K562 (cell line): ENCODE measurements at regions of chr10 and their contacts with region 1.

Region 1: GRCh38 chr10:50417886-50418830 is 166.8 kb upstream of the ASAH2 start:
- DNase-seq: peak; percentile 77 to 94 (median 84)
- ATAC-seq: peak; percentile 81
- H3K4me3 ChIP-seq: peak overlapping the region; percentile 71
- H3K27ac ChIP-seq: peak overlapping the region; percentile 75
- H3K4me1 ChIP-seq: peaks cover 8 to 42% of the 10 kb centered on the region in 2 experiments
- H3K27me3 ChIP-seq: no peaks in the 10 kb centered on the region
- CTCF ChIP-seq: no peak
- EP300 ChIP-seq: peak; percentile 50; the same call in 1 of the 2 replicates
- POLR2A ChIP-seq: peak; percentile 76
- RAD21 ChIP-seq: no peak

Region 2: DNA sequence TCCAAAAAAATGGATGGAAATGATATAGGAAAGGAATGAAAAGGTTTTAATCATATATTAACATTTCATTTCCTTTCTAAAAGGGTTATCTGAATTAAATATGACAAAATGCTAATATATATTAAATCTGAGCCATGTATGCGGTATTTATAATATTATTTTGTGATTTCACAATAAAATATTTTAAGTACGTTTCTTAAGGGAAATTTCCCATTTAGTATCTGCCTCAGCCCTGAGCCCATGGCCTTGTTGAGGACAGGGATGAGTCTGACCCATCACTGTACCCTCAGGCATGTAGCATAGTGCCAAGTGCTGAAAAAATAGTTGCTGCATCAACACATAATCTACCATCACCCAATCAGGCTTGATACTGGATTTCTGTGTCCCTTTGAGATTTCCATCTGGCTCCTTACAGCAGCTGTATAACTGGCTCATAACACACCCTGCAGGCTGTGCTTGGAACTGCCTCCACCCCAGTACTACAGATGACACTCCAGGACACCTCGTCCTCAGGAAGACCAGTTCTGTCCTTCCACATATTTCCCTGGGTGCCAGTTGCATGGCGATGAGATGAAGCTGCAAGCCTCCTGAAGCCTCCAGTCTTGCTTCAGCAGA is 107.5 kb before region 1 on chr10:
- CTCF ChIA-PET with region 1: no interaction called
- POLR2A ChIA-PET with region 1: interaction called, 3 read pairs
- in situ Hi-C with region 1: no loop called
- intact Hi-C with region 1: loop called (anchors 2 kb)
- DNase-seq: peak; percentile 73 to 88 (median 75)
- ATAC-seq: peak; percentile 84
- H3K4me3 ChIP-seq: no peak overlapping the region
- H3K27ac ChIP-seq: peak overlapping the region; percentile 37; the same call in 2 of the 3 replicates
- H3K4me1 ChIP-seq: peaks cover 7 to 49% of the 10 kb centered on the region in 2 experiments
- H3K27me3 ChIP-seq: no peaks in the 10 kb centered on the region
- CTCF ChIP-seq: peak; percentile 78 to 93 (median 78)
- EP300 ChIP-seq: no peak
- POLR2A ChIP-seq: no peak; the same call in 1 of the 2 replicates
- RAD21 ChIP-seq: peak; percentile 39 to 75; a peak in 3 of 4 replicates

Region 3: DNA sequence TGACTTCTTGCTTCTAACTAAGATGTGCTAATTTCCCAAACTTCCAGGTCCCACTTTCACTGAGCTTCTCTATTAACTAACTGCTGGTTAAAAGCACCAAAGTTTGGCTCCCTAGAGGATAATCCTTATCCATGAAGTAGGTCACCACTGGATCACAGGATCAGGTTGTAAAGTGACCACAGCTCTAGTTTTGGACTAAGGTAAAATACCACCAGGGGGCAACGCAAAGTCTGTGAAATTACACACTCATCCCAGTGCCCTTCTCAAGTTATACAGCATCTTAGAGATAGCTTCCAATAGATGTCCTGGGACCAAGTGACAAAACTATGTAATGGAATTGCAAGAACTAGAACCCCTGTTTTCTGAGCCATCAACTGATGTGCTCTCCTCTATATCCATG is 50.4 kb before region 1 on chr10:
- CTCF ChIA-PET with region 1: interaction called, 5 read pairs
- POLR2A ChIA-PET with region 1: no interaction called
- in situ Hi-C with region 1: no loop called
- intact Hi-C with region 1: loop called (anchors 2 kb)
- DNase-seq: peak; percentile 51 to 69 (median 58)
- ATAC-seq: peak; percentile 75
- H3K4me3 ChIP-seq: no peak overlapping the region
- H3K27ac ChIP-seq: no peak overlapping the region
- H3K4me1 ChIP-seq: peaks cover 4 to 28% of the 10 kb centered on the region in 2 experiments; a peak in 4 of 5 replicates
- H3K27me3 ChIP-seq: no peaks in the 10 kb centered on the region
- CTCF ChIP-seq: peak; percentile 44 to 64 (median 61); a peak in 5 of 6 replicates
- EP300 ChIP-seq: no peak
- POLR2A ChIP-seq: no peak
- RAD21 ChIP-seq: peak; percentile 58 to 75

Region 4: DNA sequence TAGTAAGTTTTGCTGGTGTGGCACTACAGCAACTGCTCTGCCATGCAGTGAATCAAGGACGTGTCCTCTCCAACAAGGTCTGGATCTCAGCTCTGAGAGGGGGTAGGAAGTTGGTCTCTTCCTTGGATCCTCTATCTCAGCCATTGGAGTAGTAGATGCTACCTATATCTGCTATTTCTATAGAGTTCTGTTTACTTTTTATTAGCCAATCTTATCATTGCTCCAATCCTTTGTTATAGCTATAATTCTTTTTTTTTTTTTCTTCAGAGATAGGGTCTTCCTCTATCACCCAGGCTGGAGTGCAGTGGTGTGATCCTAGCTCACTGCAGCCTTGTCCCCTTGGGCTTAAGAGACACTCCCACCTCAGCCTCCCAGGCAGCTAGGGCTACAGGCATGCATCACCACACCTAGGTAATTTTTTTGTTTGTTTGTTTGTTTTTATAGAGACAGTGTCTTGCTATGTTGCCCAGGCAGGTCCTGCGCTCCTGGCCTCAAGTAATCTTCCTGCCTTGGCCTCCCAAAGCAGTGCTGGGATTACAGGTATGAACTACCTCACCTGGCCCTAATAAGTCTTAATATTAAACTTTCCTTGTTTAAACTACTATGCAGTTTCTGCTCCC is 11.6 kb before region 1 on chr10:
- CTCF ChIA-PET with region 1: no interaction called
- POLR2A ChIA-PET with region 1: interaction called, 12 read pairs
- in situ Hi-C with region 1: no loop called
- intact Hi-C with region 1: no loop called
- DNase-seq: no peak
- ATAC-seq: peak; percentile 26
- H3K4me3 ChIP-seq: no peak overlapping the region
- H3K27ac ChIP-seq: peak overlapping the region; percentile 23; the same call in 2 of the 3 replicates
- H3K4me1 ChIP-seq: peaks cover 12 to 47% of the 10 kb centered on the region in 2 experiments; a peak in 4 of 5 replicates
- H3K27me3 ChIP-seq: no peaks in the 10 kb centered on the region
- CTCF ChIP-seq: no peak
- EP300 ChIP-seq: no peak
- POLR2A ChIP-seq: no peak
- RAD21 ChIP-seq: no peak

Region 5: DNA sequence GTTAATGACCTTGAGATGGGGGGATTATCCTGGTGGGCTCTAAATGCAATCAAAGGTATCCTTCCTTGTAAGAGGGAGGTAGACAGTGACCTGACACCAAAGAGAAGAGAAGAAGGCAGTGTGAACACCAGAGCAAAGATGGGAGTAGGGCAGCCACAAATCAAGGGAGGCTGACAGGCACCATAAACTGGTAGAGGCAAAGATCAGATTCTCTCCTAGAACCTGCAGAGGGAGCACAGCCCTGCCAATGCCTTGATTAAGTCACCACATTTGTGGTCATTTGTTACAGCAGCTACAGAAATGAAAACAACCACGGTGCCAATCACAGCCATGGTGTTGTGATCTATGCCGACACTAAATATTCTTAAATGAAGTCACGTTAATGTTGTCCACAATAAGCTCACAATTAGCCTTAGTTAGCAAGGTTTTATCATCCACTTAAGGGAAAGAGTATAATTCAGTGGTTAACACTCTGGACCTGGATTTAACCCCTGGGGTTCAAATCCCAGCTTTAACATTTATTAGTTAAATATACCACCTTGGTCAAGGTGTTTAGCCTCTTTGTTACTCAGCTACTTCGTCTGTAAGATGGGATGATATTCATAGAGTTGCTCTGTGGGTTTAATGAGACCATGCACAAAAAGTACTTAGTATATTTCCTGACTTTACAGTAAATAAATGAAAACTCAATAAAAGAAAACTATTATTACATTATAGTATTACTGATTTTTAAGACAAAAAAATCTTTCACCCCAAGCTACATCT is 134.8 kb after region 1 on chr10:
- CTCF ChIA-PET with region 1: no interaction called
- POLR2A ChIA-PET with region 1: no interaction called
- in situ Hi-C with region 1: no loop called
- intact Hi-C with region 1: loop called (anchors 2 kb)
- DNase-seq: peak in 2 of 4 experiments; percentile 41 to 77
- ATAC-seq: peak; percentile 43
- H3K4me3 ChIP-seq: no peak overlapping the region; the same call in 1 of the 2 replicates
- H3K27ac ChIP-seq: peak overlapping the region; percentile 23; the same call in 1 of the 3 replicates
- H3K4me1 ChIP-seq: peaks cover 34 to 63% of the 10 kb centered on the region in 2 experiments
- H3K27me3 ChIP-seq: no peaks in the 10 kb centered on the region
- CTCF ChIP-seq: peak; percentile 57 to 66 (median 60)
- EP300 ChIP-seq: peak; percentile 39; the same call in 1 of the 2 replicates
- POLR2A ChIP-seq: no peak
- RAD21 ChIP-seq: peak; percentile 57 to 68; a peak in 3 of 4 replicates